ENCODE measurements at regions of chr6 and their contacts with region 1.

Region 1: DNA sequence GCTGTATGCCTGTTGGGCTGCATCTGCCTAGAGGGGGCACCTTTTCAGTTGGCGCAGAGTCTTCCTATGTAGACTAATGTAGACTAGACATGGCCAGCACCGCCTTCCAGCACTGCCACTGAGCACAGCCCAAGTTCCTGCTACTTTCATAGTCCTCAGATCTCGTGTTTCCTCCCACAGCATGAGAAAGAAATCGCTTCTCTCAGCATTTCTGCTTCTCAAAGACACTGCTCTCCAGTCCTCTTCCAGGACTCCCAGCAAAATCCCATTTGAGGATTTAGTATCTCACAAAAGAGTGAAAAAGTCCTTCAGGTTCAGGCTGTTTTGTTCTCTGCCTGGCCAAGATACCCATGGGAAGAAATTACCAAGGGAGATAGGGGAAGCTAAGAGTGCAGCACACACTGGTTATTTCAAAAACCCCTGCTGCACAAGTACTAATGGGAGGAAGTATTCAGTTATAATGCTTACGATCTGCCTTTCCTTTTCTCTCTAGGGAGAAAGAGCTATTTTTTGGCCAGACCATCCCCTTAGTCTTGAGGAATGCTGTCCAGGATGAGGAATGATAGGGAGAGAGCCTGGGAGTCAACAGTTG is 35.7 kb downstream of the OGFRL1 start:
- DNase-seq: no peak
- ATAC-seq: no peak
- H3K4me3 ChIP-seq: no peak overlapping the region
- H3K4me3 Mint-ChIP-seq: no peak overlapping the region
- H3K27ac ChIP-seq: no peak overlapping the region
- H3K27ac Mint-ChIP-seq: no peak overlapping the region
- H3K4me1 ChIP-seq: no peaks in the 10 kb centered on the region
- H3K4me1 Mint-ChIP-seq: no peaks in the 10 kb centered on the region
- H3K27me3 ChIP-seq: peaks cover 0 to 6% of the 10 kb centered on the region in 2 experiments
- H3K27me3 Mint-ChIP-seq: peaks cover 0 to 13% of the 10 kb centered on the region in 2 donors

Region 2: GRCh38 chr6:70790483-70791224 is 533.6 kb before region 1 on chr6:
- CTCF ChIA-PET with region 1: interaction called in 1 of 2 experiments, 10 read pairs
- POLR2A ChIA-PET with region 1: no interaction called
- DNase-seq: no peak
- ATAC-seq: no peak
- H3K4me3 ChIP-seq: no peak overlapping the region
- H3K4me3 Mint-ChIP-seq: no peak overlapping the region
- H3K27ac ChIP-seq: no peak overlapping the region
- H3K27ac Mint-ChIP-seq: no peak overlapping the region
- H3K4me1 ChIP-seq: no peaks in the 10 kb centered on the region
- H3K4me1 Mint-ChIP-seq: peaks cover 0 to 6% (median 4%) of the 10 kb centered on the region in 3 donors
- H3K27me3 ChIP-seq: no peaks in the 10 kb centered on the region
- H3K27me3 Mint-ChIP-seq: no peaks in the 10 kb centered on the region

Region 3: DNA sequence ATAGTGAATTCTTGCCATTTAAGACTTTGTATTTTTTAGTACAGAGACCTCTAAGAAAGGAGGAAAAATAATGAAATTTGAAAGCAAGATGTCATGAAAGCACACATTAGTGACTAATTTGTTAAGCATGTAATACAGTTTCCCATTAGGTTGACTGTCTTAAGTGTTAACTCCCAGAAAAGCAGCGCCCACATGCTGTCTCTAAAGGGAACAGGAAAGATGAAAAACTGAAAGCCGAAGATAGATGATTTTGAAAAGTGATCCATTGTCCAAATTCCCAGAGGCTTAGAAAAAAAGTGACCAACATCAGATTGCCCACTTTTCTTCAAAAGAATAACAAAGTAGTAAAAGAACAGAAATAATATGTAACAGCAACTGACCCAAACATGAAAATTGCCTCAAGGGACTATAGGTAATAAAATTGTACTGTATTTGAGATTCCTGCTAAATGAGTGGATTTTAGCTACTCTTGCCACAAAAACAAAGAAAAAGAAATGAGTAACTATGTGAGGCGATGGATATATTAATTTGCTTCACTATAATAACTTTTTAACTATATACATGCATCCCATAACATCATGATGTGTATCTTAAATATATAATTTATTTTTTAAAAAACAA is 118.8 kb before region 1 on chr6:
- CTCF ChIA-PET with region 1: no interaction called
- POLR2A ChIA-PET with region 1: no interaction called
- DNase-seq: no peak
- ATAC-seq: no peak
- H3K4me3 ChIP-seq: no peak overlapping the region
- H3K4me3 Mint-ChIP-seq: no peak overlapping the region
- H3K27ac ChIP-seq: no peak overlapping the region
- H3K27ac Mint-ChIP-seq: no peak overlapping the region
- H3K4me1 ChIP-seq: no peaks in the 10 kb centered on the region
- H3K4me1 Mint-ChIP-seq: no peaks in the 10 kb centered on the region
- H3K27me3 ChIP-seq: no peaks in the 10 kb centered on the region
- H3K27me3 Mint-ChIP-seq: peaks cover 3% of the 10 kb centered on the region in 2 donors

Region 4: DNA sequence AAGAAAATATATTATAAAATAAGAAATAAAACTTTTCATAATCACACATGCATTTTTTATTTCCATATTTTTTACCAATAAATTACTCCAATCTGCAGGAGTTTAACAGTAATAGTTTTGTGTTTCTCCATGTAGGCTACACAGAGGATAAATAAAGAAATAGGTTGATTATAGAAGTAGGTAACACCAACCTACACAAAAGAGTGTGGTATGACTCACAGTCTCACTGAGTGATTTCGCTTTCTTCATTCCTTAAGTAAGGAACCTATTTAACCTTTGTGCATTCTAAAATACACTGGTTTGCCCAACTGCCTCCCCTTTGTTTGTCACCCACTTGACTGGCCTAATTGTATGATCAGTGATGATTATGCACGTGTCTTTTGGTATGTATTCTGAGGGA is 317.8 kb after region 1 on chr6:
- CTCF ChIA-PET with region 1: no interaction called
- POLR2A ChIA-PET with region 1: no interaction called
- DNase-seq: no peak
- ATAC-seq: no peak
- H3K4me3 ChIP-seq: no peak overlapping the region
- H3K4me3 Mint-ChIP-seq: no peak overlapping the region
- H3K27ac ChIP-seq: no peak overlapping the region
- H3K27ac Mint-ChIP-seq: no peak overlapping the region
- H3K4me1 ChIP-seq: no peaks in the 10 kb centered on the region
- H3K4me1 Mint-ChIP-seq: no peaks in the 10 kb centered on the region
- H3K27me3 ChIP-seq: no peaks in the 10 kb centered on the region
- H3K27me3 Mint-ChIP-seq: no peaks in the 10 kb centered on the region